ENCODE measurements at regions of chr17 and their contacts with region 1.

Region 1: GRCh38 chr17:67376737-67377487 is at the start of gene PITPNC1:
- DNase-seq: peak; percentile 72 to 93 (median 84)
- ATAC-seq: peak; percentile 75 to 79 (median 77)
- H3K4me3 ChIP-seq: peak within 1 kb of the TSS; percentile 82 to 99
- H3K4me3 Mint-ChIP-seq: peak within 1 kb of the TSS; percentile 89 to 97 (median 94)
- H3K27ac ChIP-seq: peak within 1 kb of the TSS; percentile 79
- H3K27ac Mint-ChIP-seq: peak within 1 kb of the TSS; percentile 90
- H3K4me1 ChIP-seq: peaks cover 22 to 51% of the 10 kb centered on the region in 2 experiments
- H3K4me1 Mint-ChIP-seq: peaks cover 40 to 50% (median 48%) of the 10 kb centered on the region in 3 donors
- H3K27me3 ChIP-seq: no peaks in the 10 kb centered on the region
- H3K27me3 Mint-ChIP-seq: no peaks in the 10 kb centered on the region
- total RNA-seq, gene PITPNC1: 82.6 to 132 (median 111) TPM

Region 2: GRCh38 chr17:67046398-67046797 is 330.5 kb before region 1 on chr17:
- CTCF ChIA-PET with region 1: no interaction called
- POLR2A ChIA-PET with region 1: no interaction called
- DNase-seq: no peak
- ATAC-seq: no peak
- H3K4me3 ChIP-seq: no peak overlapping the region
- H3K4me3 Mint-ChIP-seq: no peak overlapping the region
- H3K27ac ChIP-seq: no peak overlapping the region
- H3K27ac Mint-ChIP-seq: no peak overlapping the region
- H3K4me1 ChIP-seq: no peaks in the 10 kb centered on the region
- H3K4me1 Mint-ChIP-seq: no peaks in the 10 kb centered on the region
- H3K27me3 ChIP-seq: peaks cover 0 to 10% of the 10 kb centered on the region in 2 experiments
- H3K27me3 Mint-ChIP-seq: no peaks in the 10 kb centered on the region

Region 3: DNA sequence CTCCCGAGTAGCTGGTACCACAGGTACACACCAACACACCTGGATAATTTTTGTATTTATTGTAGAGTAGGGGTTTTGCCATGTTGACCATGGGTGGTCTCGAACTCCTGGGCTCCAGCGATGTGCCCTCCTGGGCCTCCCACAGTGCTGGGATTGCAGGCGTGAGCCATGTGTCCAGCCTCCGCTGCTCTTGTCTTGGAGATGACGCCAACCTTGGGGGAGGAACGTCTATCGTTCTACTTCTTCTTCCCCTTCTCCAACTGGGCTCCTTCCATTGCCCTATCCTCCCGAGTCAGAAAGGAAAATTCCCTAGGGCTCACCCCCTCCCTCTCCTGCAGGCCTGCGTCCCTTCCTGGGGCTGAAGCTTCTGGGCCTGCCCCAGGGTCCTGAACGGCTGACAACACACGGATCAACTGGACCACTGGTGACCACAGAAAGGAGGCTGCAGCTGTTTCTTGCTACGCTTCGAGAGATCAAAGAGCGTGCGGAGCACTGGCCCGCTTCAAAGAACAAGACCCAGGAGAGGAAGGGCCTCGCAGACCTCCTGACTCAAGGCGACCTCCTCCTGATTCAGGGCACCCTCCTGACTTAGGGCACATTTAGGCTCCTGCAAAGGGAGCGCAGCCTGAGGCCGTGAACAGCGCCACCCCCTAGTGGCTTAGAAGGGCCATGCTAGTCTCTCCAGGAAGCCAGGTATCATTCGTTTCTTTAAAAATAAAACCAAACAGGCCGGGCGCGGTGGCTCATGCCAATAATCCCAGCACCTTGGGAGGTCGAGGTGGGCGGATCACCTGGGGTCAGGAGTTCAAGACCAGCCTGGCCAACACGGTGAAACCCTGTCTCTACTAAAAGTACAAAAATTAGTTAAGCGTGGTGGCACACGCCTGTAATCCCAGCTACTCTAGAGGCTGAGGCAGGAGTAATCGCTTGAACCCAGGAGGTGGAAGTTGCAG is 83.4 kb before region 1 on chr17:
- CTCF ChIA-PET with region 1: no interaction called
- POLR2A ChIA-PET with region 1: no interaction called
- DNase-seq: peak; percentile 28 to 82 (median 61)
- ATAC-seq: peak; percentile 89 to 94 (median 91)
- H3K4me3 ChIP-seq: no peak overlapping the region
- H3K4me3 Mint-ChIP-seq: peak overlapping the region in 2 of 3 donors; percentile 15 to 31
- H3K27ac ChIP-seq: no peak overlapping the region
- H3K27ac Mint-ChIP-seq: no peak overlapping the region
- H3K4me1 ChIP-seq: peaks cover 0 to 8% of the 10 kb centered on the region in 2 experiments
- H3K4me1 Mint-ChIP-seq: peaks cover 0 to 6% (median 0%) of the 10 kb centered on the region in 3 donors
- H3K27me3 ChIP-seq: no peaks in the 10 kb centered on the region
- H3K27me3 Mint-ChIP-seq: no peaks in the 10 kb centered on the region

Region 4: DNA sequence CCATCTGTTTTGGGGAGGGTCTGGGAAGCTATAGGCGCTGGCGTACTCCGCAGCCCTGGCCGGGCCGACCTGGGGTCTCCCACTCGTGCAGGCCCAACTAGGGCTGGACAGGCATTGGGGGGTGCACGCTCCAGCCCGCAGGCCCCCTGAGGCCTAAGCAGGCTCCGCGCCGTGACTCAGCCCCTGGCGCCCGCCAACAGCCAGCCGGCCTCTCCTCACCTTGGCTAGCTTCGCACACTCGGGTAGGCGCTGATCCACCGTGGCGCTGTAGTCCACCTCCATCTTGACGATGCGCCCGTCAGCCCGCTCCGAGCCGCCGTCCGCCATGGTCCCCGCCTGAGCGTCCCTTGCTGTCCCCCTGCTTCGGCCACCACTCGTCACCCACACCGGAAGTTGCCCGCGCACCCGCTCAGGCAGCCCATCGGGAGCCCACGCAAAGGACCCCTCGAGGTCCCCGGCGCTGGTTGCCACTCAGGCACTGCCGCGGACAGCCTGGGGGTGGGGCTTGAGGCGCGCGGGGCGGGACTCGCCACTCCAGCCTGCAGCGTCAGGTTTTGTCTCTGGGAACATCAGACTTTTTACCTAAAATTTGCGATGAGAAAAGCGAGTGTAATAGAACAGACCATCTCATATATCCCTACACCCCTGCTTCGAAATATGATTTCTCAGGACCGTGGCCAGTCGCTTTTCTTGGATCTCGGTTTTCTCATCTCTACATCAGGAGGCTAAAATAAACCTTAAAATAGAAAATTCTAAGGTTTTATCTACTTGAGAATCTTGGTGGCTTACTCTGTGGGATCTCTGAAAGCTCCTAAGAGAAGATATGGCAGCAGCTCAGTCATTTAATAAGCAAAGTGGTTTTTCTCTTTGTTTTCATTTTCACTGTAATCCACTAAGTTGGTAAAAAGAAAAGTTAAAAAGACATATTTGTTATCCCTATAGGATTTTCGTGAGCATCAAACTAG is 10.4 kb before region 1 on chr17 and contains the start of gene PSMD12:
- CTCF ChIA-PET with region 1: interaction called, 15 to 30 read pairs
- POLR2A ChIA-PET with region 1: interaction called, 3 to 9 read pairs
- DNase-seq: peak; percentile 82 to 96 (median 89)
- ATAC-seq: peak; percentile 97 to 99 (median 98)
- H3K4me3 ChIP-seq: peak within 1 kb of the TSS; percentile 94 to 97
- H3K4me3 Mint-ChIP-seq: peak within 1 kb of the TSS; percentile 87 to 96 (median 92)
- H3K27ac ChIP-seq: peak within 1 kb of the TSS; percentile 94
- H3K27ac Mint-ChIP-seq: peak within 1 kb of the TSS; percentile 96 to 98
- H3K4me1 ChIP-seq: peaks cover 14 to 24% of the 10 kb centered on the region in 2 experiments
- H3K4me1 Mint-ChIP-seq: peaks cover 46 to 52% (median 48%) of the 10 kb centered on the region in 3 donors
- H3K27me3 ChIP-seq: no peaks in the 10 kb centered on the region
- H3K27me3 Mint-ChIP-seq: no peaks in the 10 kb centered on the region
- total RNA-seq, gene PSMD12: 28.1 to 49.9 (median 37.7) TPM

Region 5: DNA sequence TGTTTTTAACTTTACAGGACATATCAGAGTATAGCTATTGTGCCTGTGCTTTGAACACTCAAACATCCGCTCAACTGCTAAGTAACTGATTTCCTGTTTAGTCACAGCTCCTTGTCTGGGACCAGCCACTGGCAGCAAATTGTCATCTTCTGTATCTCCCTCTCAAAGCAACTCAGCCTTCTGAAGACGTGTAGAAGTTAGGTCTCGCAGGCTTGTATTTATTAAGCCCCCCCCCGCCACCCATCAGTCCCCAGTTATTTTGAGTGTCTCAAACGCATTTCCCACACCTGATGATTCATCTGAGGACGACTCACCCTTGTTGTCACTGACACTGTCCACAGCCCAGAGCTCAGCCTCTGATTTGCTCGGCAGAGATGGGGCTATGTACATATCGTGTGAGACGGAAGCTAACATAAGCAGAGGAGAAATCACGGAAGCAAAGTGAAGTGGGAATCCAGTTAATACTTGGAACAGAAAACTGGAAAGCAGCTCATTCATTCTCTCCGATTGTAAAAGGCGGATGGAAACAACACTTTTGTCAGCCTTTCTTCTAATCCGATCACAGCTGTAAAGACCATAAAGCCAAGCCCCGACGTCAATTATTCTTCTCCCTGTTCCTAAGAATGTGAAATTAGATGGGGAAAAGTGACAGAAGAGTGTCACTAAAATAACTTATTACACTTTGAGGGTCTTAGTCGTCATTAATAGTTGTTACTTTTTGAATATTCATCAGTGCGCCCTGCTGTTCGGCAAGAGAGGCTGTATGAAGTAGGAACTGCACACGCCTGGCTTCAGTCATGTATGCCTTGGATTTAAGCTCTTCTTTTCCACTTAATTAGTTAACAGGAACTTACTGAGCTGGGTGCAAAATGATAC is 64.4 kb after region 1 on chr17:
- CTCF ChIA-PET with region 1: interaction called, 4 to 34 read pairs
- POLR2A ChIA-PET with region 1: interaction called, 5 read pairs
- DNase-seq: peak; percentile 48 to 90 (median 73)
- ATAC-seq: peak; percentile 91 to 94 (median 93)
- H3K4me3 ChIP-seq: peak overlapping the region; percentile 6 to 46
- H3K4me3 Mint-ChIP-seq: peak overlapping the region; percentile 65 to 81 (median 75)
- H3K27ac ChIP-seq: peak overlapping the region; percentile 98
- H3K27ac Mint-ChIP-seq: peak overlapping the region; percentile 96 to 97
- H3K4me1 ChIP-seq: peaks cover 60 to 88% of the 10 kb centered on the region in 2 experiments
- H3K4me1 Mint-ChIP-seq: peaks cover 93 to 97% (median 93%) of the 10 kb centered on the region in 3 donors
- H3K27me3 ChIP-seq: no peaks in the 10 kb centered on the region
- H3K27me3 Mint-ChIP-seq: no peaks in the 10 kb centered on the region

Region 6: DNA sequence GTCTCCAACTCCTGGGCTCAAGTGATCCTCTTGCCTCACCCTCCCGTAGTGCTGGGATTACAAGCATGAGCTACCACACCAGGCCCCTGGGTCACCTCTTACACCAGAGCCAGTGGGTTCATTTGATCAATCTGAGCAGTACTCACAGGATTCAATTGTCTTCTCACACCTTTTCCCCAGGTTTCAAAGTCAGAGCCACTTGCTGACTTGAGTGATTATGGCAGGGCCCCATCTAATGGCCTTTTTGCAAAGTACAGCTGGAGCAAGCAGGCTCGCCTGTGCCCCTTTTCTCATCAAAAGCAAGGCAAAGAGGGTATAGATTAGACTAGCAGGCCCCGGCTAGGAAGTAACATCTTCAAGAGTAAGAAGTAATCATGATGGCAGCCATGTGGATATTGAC is 226.0 kb after region 1 on chr17:
- CTCF ChIA-PET with region 1: interaction called in 1 of 2 experiments, 11 read pairs
- POLR2A ChIA-PET with region 1: no interaction called
- DNase-seq: peak in 33 of 35 experiments; percentile 7 to 71 (median 43)
- ATAC-seq: peak; percentile 54 to 80 (median 65)
- H3K4me3 ChIP-seq: no peak overlapping the region
- H3K4me3 Mint-ChIP-seq: no peak overlapping the region
- H3K27ac ChIP-seq: no peak overlapping the region
- H3K27ac Mint-ChIP-seq: peak overlapping the region; percentile 39 to 74
- H3K4me1 ChIP-seq: peaks cover 0 to 3% of the 10 kb centered on the region in 2 experiments
- H3K4me1 Mint-ChIP-seq: peaks cover 26 to 31% (median 28%) of the 10 kb centered on the region in 3 donors
- H3K27me3 ChIP-seq: no peaks in the 10 kb centered on the region
- H3K27me3 Mint-ChIP-seq: no peaks in the 10 kb centered on the region

Region 7: DNA sequence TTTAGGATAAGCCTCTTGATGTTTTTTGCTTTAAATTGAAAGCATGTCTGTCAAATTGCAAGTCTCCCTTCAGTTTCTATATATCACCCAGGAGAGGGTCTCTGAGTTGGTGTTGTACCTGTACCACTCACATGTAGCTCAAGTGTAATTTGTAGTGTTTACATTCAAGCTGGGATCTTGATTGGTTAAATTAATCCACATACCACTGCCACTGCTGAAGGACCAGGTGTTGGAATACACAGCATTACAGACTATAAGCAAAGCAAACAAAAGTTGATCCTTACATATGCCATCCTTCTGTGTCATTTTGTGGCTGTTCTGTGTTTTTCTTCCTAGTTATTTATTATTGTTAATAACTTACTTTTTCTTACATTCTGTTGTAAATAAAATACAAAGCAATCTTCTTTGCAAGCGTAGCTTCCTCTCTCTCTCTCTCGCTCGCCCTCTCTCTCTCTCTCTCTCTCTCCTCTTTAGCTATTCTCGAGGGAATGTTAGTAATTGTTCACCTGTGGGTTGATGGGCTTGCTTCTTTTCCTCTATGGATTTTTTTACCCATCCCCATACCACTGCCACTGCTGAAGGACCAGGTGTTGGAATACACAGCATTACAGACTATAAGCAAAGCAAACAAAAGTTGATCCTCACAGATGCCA is 320.1 kb after region 1 on chr17:
- CTCF ChIA-PET with region 1: interaction called, 3 to 7 read pairs
- POLR2A ChIA-PET with region 1: interaction called, 4 to 21 read pairs
- DNase-seq: no peak
- ATAC-seq: no peak
- H3K4me3 ChIP-seq: no peak overlapping the region
- H3K4me3 Mint-ChIP-seq: no peak overlapping the region
- H3K27ac ChIP-seq: no peak overlapping the region
- H3K27ac Mint-ChIP-seq: no peak overlapping the region
- H3K4me1 ChIP-seq: no peaks in the 10 kb centered on the region
- H3K4me1 Mint-ChIP-seq: no peaks in the 10 kb centered on the region
- H3K27me3 ChIP-seq: no peaks in the 10 kb centered on the region
- H3K27me3 Mint-ChIP-seq: no peaks in the 10 kb centered on the region